ENCODE measurements at regions of chr16 and their contacts with region 1.

Region 1: GRCh38 chr16:84663433-84664101 is 15.3 kb downstream of the KLHL36 start:
- DNase-seq: no peak
- H3K4me3 ChIP-seq: no peak overlapping the region
- H3K27ac ChIP-seq: no peak overlapping the region
- H3K4me1 ChIP-seq: no peaks in the 10 kb centered on the region
- H3K27me3 ChIP-seq: no peaks in the 10 kb centered on the region
- CTCF ChIP-seq: no peak
- POLR2A ChIP-seq: no peak

Region 2: DNA sequence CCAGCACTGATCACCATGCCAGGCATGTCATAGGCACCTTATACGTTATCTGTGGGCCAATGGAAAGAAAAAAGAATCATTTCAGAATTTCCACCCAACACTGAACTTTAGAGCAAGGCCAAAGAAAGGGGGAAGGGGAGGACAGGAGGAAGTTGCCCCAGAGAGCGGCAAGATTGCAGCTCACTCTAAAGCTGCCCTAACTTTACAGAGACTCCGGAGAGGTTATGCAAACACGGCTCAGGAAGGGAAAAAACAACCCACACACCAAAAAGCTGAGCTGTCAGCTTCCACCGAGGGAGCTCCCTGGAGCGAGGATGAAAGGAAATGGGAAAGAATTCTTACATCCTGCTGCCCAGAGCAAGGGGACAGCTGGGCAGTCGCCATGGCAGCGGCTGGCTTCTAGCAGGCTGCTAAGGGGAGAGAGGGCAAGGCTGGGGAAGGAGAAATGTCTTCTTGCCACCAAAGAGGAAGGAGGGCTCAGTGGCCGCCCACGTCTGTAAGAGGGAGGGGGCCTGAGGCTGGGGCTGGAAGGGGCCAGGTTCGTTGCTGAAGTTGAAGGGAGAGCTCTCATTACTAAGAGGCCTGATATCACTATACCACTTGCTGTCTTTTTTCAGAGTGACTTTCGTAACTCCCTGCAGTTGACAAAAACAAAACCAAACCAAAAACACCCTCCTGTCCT is 63.9 kb before region 1 on chr16:
- intact Hi-C with region 1: no loop called
- DNase-seq: no peak
- H3K4me3 ChIP-seq: no peak overlapping the region
- H3K27ac ChIP-seq: peak overlapping the region in 1 of 2 donors; percentile 53
- H3K4me1 ChIP-seq: no peaks in the 10 kb centered on the region
- H3K27me3 ChIP-seq: no peaks in the 10 kb centered on the region
- CTCF ChIP-seq: no peak
- POLR2A ChIP-seq: no peak

Region 3: GRCh38 chr16:84633622-84634021 is 29.9 kb before region 1 on chr16:
- intact Hi-C with region 1: loop called (anchors 2 kb)
- DNase-seq: no peak
- H3K4me3 ChIP-seq: no peak overlapping the region
- H3K27ac ChIP-seq: no peak overlapping the region
- H3K4me1 ChIP-seq: no peaks in the 10 kb centered on the region
- H3K27me3 ChIP-seq: no peaks in the 10 kb centered on the region
- CTCF ChIP-seq: no peak
- POLR2A ChIP-seq: no peak

Region 4: DNA sequence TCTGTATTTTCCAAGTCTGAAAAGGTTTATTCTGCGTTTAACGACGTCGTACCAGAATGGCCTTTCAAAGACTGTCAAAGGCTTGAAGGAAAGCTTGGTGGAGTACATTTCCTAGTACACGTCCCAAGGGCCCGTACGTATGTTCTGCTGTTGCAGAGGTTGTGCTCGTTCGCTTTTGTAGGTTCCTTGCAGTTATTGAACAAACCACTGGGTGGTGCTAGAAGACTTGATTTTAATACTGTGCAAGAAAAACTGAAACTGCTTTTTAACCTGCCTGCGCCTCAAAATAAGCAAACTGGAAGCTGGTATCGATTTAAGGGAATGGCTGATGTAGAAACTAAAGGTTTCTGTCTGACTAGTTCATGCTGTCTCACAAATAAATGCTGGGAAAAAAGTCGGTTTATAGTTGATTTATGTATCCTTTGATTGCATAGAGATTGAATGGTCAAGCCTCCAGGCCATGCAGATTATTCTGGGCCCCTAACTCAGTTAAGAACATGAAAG is 90.8 kb after region 1 on chr16:
- intact Hi-C with region 1: no loop called
- DNase-seq: peak; percentile 84
- H3K4me3 ChIP-seq: no peak overlapping the region
- H3K27ac ChIP-seq: peak overlapping the region; percentile 32 to 72
- H3K4me1 ChIP-seq: no peaks in the 10 kb centered on the region
- H3K27me3 ChIP-seq: no peaks in the 10 kb centered on the region
- CTCF ChIP-seq: peak; percentile 33 to 93 (median 90)
- POLR2A ChIP-seq: no peak